ENCODE measurements at regions of chr5 and their contacts with region 1.

Region 1: GRCh38 chr5:132495667-132496190 is 5.2 kb upstream of the IRF1 start:
- DNase-seq: peak; percentile 44 to 83 (median 60)
- ATAC-seq: peak; percentile 28
- H3K4me3 ChIP-seq: peak overlapping the region; percentile 93
- H3K4me3 Mint-ChIP-seq: peak overlapping the region; percentile 97
- H3K27ac ChIP-seq: peak overlapping the region; percentile 82 to 93
- H3K27ac Mint-ChIP-seq: peak overlapping the region; percentile 97
- H3K4me1 ChIP-seq: peaks cover 86% of the 10 kb centered on the region
- H3K4me1 Mint-ChIP-seq: peaks cover 66% of the 10 kb centered on the region
- H3K27me3 ChIP-seq: no peaks in the 10 kb centered on the region
- H3K27me3 Mint-ChIP-seq: no peaks in the 10 kb centered on the region
- CTCF ChIP-seq: no peak

Region 2: DNA sequence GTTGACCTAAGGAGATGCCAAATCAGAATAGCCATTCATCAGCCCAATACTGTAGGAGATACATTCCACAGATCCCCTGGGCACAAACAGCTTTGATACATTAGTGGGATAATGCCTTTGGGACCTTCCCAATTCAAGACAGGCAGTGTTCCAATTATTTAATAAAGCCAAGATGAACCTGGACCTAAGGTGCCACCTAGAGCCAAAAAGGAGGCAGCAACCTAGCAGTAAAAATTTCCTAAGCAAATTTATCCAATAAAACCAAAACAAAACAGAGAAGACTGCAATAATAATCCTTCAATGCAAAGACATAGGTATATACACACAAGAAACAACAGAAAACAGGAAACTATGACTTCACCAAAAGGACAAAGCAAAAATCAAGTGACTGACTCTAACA is 1583.6 kb before region 1 on chr5:
- CTCF ChIA-PET with region 1: no interaction called
- POLR2A ChIA-PET with region 1: no interaction called
- intact Hi-C with region 1: no loop called
- DNase-seq: no peak
- ATAC-seq: no peak
- H3K4me3 ChIP-seq: no peak overlapping the region
- H3K4me3 Mint-ChIP-seq: no peak overlapping the region
- H3K27ac ChIP-seq: no peak overlapping the region
- H3K27ac Mint-ChIP-seq: no peak overlapping the region
- H3K4me1 ChIP-seq: no peaks in the 10 kb centered on the region
- H3K4me1 Mint-ChIP-seq: no peaks in the 10 kb centered on the region
- H3K27me3 ChIP-seq: no peaks in the 10 kb centered on the region
- H3K27me3 Mint-ChIP-seq: peaks cover 15% of the 10 kb centered on the region
- CTCF ChIP-seq: no peak

Region 3: GRCh38 chr5:132386644-132387286 is 109.0 kb before region 1 on chr5:
- CTCF ChIA-PET with region 1: interaction called, 104 read pairs
- POLR2A ChIA-PET with region 1: interaction called, 94 read pairs
- intact Hi-C with region 1: loop called in 1 of 2 experiments (anchors 1 kb)
- DNase-seq: peak; percentile 66 to 90 (median 75)
- ATAC-seq: peak; percentile 92
- H3K4me3 ChIP-seq: no peak overlapping the region
- H3K4me3 Mint-ChIP-seq: no peak overlapping the region
- H3K27ac ChIP-seq: no peak overlapping the region
- H3K27ac Mint-ChIP-seq: peak overlapping the region; percentile 60
- H3K4me1 ChIP-seq: peaks cover 30% of the 10 kb centered on the region
- H3K4me1 Mint-ChIP-seq: peaks cover 31% of the 10 kb centered on the region
- H3K27me3 ChIP-seq: no peaks in the 10 kb centered on the region
- H3K27me3 Mint-ChIP-seq: no peaks in the 10 kb centered on the region
- CTCF ChIP-seq: peak; percentile 76

Region 4: GRCh38 chr5:132410451-132411381 is 85.0 kb before region 1 on chr5:
- CTCF ChIA-PET with region 1: interaction called, 18 read pairs
- POLR2A ChIA-PET with region 1: interaction called, 446 read pairs
- intact Hi-C with region 1: loop called (anchors 1 to 2 kb)
- DNase-seq: peak; percentile 69 to 93 (median 76)
- ATAC-seq: peak; percentile 69
- H3K4me3 ChIP-seq: peak overlapping the region; percentile 91
- H3K4me3 Mint-ChIP-seq: peak overlapping the region; percentile 96
- H3K27ac ChIP-seq: peak overlapping the region; percentile 98
- H3K27ac Mint-ChIP-seq: peak overlapping the region; percentile 98
- H3K4me1 ChIP-seq: peaks cover 64% of the 10 kb centered on the region
- H3K4me1 Mint-ChIP-seq: peaks cover 92% of the 10 kb centered on the region
- H3K27me3 ChIP-seq: no peaks in the 10 kb centered on the region
- H3K27me3 Mint-ChIP-seq: no peaks in the 10 kb centered on the region
- CTCF ChIP-seq: peak; percentile 74

Region 5: DNA sequence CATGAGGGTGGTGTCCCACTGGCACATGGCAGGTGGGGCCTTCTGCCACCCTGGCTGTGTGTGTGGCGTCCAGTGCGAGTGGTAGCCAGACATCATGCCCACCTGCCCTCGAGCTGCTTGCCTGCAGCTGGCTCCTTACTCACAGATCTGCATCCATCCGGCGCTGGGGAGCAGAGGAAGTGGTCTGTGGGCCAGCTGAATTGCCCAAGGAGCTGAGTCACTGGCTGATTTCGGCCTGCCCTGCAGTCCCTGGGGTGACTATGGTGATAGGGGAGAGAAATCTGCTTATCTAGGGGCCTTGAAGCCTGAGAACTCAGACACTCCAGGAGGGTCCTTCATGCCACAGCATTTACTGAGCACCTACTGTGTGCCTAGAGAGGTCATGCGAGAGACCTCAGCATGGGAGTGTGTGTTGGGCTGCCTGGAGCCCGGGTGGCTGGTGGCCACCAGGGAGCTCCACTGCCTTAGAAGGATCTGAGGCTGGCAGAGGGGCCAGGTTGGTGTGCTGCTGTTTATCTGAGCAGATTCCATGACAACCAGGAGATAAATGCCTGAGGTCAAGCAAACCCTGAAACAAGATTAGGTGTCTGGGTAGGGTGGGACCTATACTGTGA is 69.1 kb before region 1 on chr5:
- CTCF ChIA-PET with region 1: interaction called, 12 read pairs
- POLR2A ChIA-PET with region 1: interaction called, 645 read pairs
- intact Hi-C with region 1: loop called in 1 of 2 experiments (anchors 2 kb)
- DNase-seq: peak; percentile 20 to 88 (median 52)
- ATAC-seq: peak; percentile 32
- H3K4me3 ChIP-seq: peak overlapping the region; percentile 13
- H3K4me3 Mint-ChIP-seq: peak overlapping the region; percentile 77
- H3K27ac ChIP-seq: peak overlapping the region; percentile 78 to 85
- H3K27ac Mint-ChIP-seq: peak overlapping the region; percentile 93
- H3K4me1 ChIP-seq: peaks cover 99% of the 10 kb centered on the region
- H3K4me1 Mint-ChIP-seq: peaks cover 97% of the 10 kb centered on the region
- H3K27me3 ChIP-seq: no peaks in the 10 kb centered on the region
- H3K27me3 Mint-ChIP-seq: no peaks in the 10 kb centered on the region
- CTCF ChIP-seq: no peak

Region 6: GRCh38 chr5:132456296-132457001 is 39.3 kb before region 1 on chr5:
- CTCF ChIA-PET with region 1: interaction called, 34 read pairs
- POLR2A ChIA-PET with region 1: interaction called, 1,045 read pairs
- intact Hi-C with region 1: loop called in 1 of 2 experiments (anchors 5 kb)
- DNase-seq: peak; percentile 56 to 91 (median 67)
- ATAC-seq: peak; percentile 73
- H3K4me3 ChIP-seq: peak overlapping the region; percentile 17
- H3K4me3 Mint-ChIP-seq: peak overlapping the region; percentile 57
- H3K27ac ChIP-seq: peak overlapping the region; percentile 88 to 89
- H3K27ac Mint-ChIP-seq: peak overlapping the region; percentile 97
- H3K4me1 ChIP-seq: peaks cover 87% of the 10 kb centered on the region
- H3K4me1 Mint-ChIP-seq: peaks cover 93% of the 10 kb centered on the region
- H3K27me3 ChIP-seq: no peaks in the 10 kb centered on the region
- H3K27me3 Mint-ChIP-seq: no peaks in the 10 kb centered on the region
- CTCF ChIP-seq: no peak

Region 7: GRCh38 chr5:132556763-132557477 is 61.2 kb after region 1 on chr5 and contains the start of gene RAD50:
- CTCF ChIA-PET with region 1: no interaction called
- POLR2A ChIA-PET with region 1: interaction called, 24 read pairs
- intact Hi-C with region 1: no loop called
- DNase-seq: peak; percentile 79 to 96 (median 88)
- ATAC-seq: peak; percentile 94
- H3K4me3 ChIP-seq: peak within 1 kb of the TSS; percentile 83
- H3K4me3 Mint-ChIP-seq: peak within 1 kb of the TSS; percentile 95
- H3K27ac ChIP-seq: peak within 1 kb of the TSS; percentile 76 to 78
- H3K27ac Mint-ChIP-seq: peak within 1 kb of the TSS; percentile 98
- H3K4me1 ChIP-seq: peaks cover 22% of the 10 kb centered on the region
- H3K4me1 Mint-ChIP-seq: peaks cover 43% of the 10 kb centered on the region
- H3K27me3 ChIP-seq: no peaks in the 10 kb centered on the region
- H3K27me3 Mint-ChIP-seq: no peaks in the 10 kb centered on the region
- CTCF ChIP-seq: no peak
- total RNA-seq, gene RAD50: 12.7 to 13.4 TPM

Measured in CD4-positive, alpha-beta T cell (primary cell).